ENCODE measurements at regions of chr3 and their contacts with region 1.

Region 1: GRCh38 chr3:139427283-139427993 is 38.0 kb upstream of the COPB2 start:
- DNase-seq: no peak
- H3K4me3 ChIP-seq: no peak overlapping the region
- H3K27ac ChIP-seq: no peak overlapping the region
- H3K4me1 ChIP-seq: no peaks in the 10 kb centered on the region
- H3K27me3 ChIP-seq: no peaks in the 10 kb centered on the region
- CTCF ChIP-seq: peak; percentile 69

Region 2: GRCh38 chr3:138673641-138674530 is 753.6 kb before region 1 on chr3:
- intact Hi-C with region 1: no loop called
- DNase-seq: peak; percentile 27
- H3K4me3 ChIP-seq: no peak overlapping the region
- H3K27ac ChIP-seq: no peak overlapping the region
- H3K4me1 ChIP-seq: no peaks in the 10 kb centered on the region
- H3K27me3 ChIP-seq: no peaks in the 10 kb centered on the region
- CTCF ChIP-seq: no peak

Region 3: GRCh38 chr3:139519998-139520737 is 92.7 kb after region 1 on chr3:
- intact Hi-C with region 1: no loop called
- DNase-seq: peak; percentile 47
- H3K4me3 ChIP-seq: no peak overlapping the region
- H3K27ac ChIP-seq: no peak overlapping the region
- H3K4me1 ChIP-seq: no peaks in the 10 kb centered on the region
- H3K27me3 ChIP-seq: no peaks in the 10 kb centered on the region
- CTCF ChIP-seq: peak; percentile 35

Region 4: DNA sequence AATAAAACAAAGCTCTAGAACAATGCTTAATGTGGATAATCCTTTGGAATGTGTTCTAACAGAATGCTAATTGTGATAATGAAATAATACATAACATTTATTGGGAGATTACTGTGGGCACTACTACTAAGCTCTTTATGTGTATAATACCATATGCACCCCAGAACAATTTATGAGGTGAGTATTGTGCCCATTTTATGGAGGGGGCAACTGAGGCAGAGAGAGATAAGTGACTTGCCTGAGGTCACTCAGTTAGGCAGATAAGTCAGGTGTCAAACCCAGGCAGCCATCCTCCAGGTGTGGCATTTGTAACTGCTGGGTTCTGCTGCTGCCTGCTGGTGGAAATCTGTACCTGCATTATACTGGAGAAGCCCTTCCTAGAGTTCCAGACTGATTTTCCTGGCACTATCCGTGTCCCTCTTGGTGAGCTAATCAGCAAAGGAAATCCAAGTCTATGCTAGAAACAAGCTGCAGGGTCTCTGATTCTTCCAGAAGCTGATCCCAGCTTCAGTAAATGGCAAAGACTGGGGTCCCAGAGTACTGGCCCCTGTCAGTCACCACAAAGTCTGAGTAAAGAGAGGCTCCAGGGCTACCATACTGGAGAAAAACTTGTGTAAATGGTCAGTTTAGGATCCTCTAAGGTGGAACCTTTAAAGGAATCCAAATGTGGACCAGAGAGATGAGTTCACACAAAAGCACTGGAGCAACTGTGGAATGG is 134.7 kb after region 1 on chr3:
- intact Hi-C with region 1: loop called (anchors 2 kb)
- DNase-seq: peak; percentile 41
- H3K4me3 ChIP-seq: no peak overlapping the region
- H3K27ac ChIP-seq: no peak overlapping the region
- H3K4me1 ChIP-seq: no peaks in the 10 kb centered on the region
- H3K27me3 ChIP-seq: no peaks in the 10 kb centered on the region
- CTCF ChIP-seq: peak; percentile 33

Region 5: GRCh38 chr3:140863580-140864009 is 1436.2 kb after region 1 on chr3:
- intact Hi-C with region 1: loop called (anchors 5 kb)
- DNase-seq: peak; percentile 69
- H3K4me3 ChIP-seq: no peak overlapping the region
- H3K27ac ChIP-seq: no peak overlapping the region
- H3K4me1 ChIP-seq: no peaks in the 10 kb centered on the region
- H3K27me3 ChIP-seq: no peaks in the 10 kb centered on the region
- CTCF ChIP-seq: peak; percentile 36

Measured in colonic mucosa (tissue), 4 donors.